ENCODE measurements at regions of chr21 and their contacts with region 1.

Region 1: GRCh38 chr21:27700974-27701614 is 734.2 kb upstream of the ADAMTS5 start:
- DNase-seq: peak; percentile 92
- H3K4me3 ChIP-seq: no peak overlapping the region
- H3K27ac ChIP-seq: no peak overlapping the region
- H3K4me1 ChIP-seq: peaks cover 15% of the 10 kb centered on the region
- H3K27me3 ChIP-seq: no peaks in the 10 kb centered on the region

Region 2: DNA sequence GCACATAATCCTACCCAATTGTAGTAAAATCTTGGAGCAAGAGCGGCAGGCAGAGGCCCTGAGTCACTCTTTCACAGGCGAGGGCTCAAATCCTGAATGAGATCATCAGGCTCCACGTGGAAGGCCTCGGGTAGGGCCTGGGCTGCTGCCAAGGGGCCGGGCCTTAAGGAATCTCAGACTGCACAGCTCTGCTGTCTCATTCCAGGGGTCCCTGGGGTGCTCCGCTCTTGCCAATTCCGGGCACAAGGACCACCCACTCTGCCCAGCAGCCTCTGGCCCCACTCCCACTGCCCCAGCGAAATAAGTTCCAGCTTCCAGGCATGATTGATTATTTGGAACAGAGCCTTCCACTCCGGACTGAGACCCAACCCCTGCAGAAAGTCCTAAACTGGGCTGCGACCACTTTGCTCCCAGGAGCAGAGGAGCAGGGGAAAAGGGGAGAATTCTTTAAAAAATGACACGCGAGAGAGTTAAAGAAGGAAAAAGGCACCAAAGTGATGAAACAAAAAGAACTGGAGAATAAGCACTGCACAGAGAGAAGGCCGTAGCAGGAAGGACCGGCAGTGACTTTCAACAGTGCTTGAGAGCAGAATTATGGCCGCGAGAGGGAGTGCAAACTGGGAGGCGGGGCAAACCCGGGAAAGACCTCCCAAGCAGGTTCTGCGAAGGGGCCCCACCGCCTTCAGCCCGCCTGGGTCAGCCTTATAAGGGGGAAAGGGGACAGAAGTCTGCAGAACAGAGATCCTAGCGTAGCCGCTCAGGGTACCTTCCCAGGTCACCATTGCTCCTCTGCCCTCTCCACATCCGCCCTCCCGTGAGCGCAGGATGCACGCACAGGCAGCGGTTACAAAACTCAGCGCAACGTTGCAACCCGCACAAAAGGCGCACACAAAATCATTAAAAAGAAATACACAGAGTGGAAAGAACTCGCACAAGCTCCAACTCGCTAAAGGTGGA is 857.8 kb before region 1 on chr21:
- in situ Hi-C with region 1: loop called (anchors 10 kb)
- DNase-seq: peak; percentile 98
- H3K4me3 ChIP-seq: peak overlapping the region; percentile 93
- H3K27ac ChIP-seq: peak overlapping the region; percentile 84
- H3K4me1 ChIP-seq: peaks cover 36% of the 10 kb centered on the region
- H3K27me3 ChIP-seq: no peaks in the 10 kb centered on the region

Region 3: DNA sequence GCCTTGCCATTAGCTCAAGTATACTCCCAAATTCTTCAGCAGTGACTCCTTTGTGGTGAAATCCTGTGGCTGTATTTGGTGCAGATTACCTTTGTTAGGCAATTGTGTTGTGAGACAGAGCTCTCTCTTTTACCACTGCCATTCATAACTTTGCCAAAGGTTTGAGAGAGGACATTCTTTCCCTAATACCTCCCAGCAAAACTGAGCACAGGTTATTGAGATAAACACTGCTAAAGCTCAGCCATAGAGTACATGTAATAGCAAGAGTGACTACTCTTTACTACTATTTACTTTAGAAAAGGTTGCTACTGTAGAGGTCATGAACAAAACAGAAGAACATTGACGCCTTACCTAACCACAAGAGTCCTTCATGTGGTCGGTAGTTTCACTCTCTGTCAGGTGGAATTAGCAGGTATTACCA is 220.2 kb before region 1 on chr21:
- in situ Hi-C with region 1: loop called (anchors 10 kb)
- DNase-seq: peak; percentile 68
- H3K4me3 ChIP-seq: no peak overlapping the region
- H3K27ac ChIP-seq: no peak overlapping the region
- H3K4me1 ChIP-seq: peaks cover 30% of the 10 kb centered on the region
- H3K27me3 ChIP-seq: no peaks in the 10 kb centered on the region

Region 4: DNA sequence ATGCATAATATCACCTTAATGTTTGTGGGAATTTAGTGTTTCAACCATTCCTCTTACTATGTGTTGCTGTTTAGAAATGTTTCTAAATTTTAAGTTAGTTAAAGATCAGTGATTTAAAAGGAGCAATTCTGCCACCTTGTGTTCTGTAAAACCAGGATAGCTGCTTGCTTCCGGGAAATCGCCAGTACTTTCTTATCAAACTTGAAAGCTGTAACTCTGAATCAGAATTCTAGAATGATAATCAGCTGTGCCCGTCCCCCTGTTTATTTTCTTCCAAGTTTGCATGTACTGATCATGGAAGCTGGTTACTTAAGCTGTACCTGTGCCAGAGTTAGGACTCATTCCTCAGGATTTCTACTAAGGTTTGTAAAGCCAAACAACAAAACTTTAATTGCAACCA is 635.2 kb after region 1 on chr21:
- in situ Hi-C with region 1: loop called (anchors 10 kb)
- DNase-seq: peak; percentile 87
- H3K4me3 ChIP-seq: peak overlapping the region; percentile 28; the same call in 1 of the 2 replicates
- H3K27ac ChIP-seq: peak overlapping the region; percentile 56
- H3K4me1 ChIP-seq: peaks cover 54% of the 10 kb centered on the region
- H3K27me3 ChIP-seq: no peaks in the 10 kb centered on the region

Region 5: DNA sequence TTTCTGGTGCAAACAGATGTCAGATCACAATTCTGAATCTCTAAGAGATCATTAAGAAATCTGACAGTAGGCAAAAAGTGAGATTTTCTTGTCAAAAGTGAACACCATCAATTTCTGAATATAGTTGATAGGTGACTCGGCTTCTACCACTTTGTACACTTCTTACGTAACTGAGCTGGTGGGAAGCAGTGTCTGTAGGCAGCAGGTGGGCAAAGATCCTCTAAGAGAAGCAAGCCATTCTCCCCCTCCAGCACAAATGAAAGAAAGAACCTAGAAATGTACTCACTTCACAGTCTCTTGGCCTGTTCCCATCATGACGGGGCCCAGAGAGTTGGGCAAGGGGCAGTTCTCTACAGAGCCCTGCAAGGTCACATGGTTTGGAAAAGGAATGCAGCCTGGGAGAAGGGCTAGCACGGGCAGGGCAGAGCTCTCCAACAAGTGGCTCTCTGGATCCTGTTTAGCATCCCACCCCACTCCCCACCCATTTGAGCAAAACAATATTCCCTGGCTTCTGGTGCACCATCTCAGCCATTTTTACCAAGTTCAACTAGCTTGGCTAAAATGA is 879.0 kb after region 1 on chr21:
- in situ Hi-C with region 1: no loop called
- DNase-seq: no peak
- H3K4me3 ChIP-seq: no peak overlapping the region
- H3K27ac ChIP-seq: no peak overlapping the region
- H3K4me1 ChIP-seq: peaks cover 13% of the 10 kb centered on the region
- H3K27me3 ChIP-seq: no peaks in the 10 kb centered on the region

Region 6: GRCh38 chr21:28745131-28746016 is 1044.3 kb after region 1 on chr21:
- in situ Hi-C with region 1: loop called (anchors 10 kb)
- DNase-seq: peak; percentile 80
- H3K4me3 ChIP-seq: peak overlapping the region; percentile 68
- H3K27ac ChIP-seq: no peak overlapping the region
- H3K4me1 ChIP-seq: peaks cover 13% of the 10 kb centered on the region
- H3K27me3 ChIP-seq: no peaks in the 10 kb centered on the region